Right ventricle myocardium inferior (tissue), 1 donor: ENCODE measurements at regions of chr15 and their contacts with region 1.

Region 1: DNA sequence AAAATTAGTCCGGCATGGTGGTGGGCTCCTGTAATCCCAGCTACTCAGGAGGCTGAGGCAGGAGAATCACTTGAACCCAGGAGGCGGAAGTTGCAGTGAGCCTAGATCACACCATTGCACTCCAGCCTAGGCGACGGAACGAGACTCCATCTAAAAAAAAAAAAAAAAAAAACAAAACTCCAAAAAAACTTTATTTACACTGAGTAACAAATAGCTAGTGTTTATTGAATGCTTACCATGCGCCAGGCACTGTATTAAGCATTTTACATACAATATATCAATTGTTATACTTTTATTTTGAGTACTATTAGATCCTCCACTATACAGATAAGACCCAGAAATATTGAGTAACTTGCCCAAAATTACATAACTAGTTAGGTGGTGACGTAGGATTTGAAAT is 17.4 kb upstream of the ARIH1 start:
- DNase-seq: no peak
- ATAC-seq: no peak

Region 2: DNA sequence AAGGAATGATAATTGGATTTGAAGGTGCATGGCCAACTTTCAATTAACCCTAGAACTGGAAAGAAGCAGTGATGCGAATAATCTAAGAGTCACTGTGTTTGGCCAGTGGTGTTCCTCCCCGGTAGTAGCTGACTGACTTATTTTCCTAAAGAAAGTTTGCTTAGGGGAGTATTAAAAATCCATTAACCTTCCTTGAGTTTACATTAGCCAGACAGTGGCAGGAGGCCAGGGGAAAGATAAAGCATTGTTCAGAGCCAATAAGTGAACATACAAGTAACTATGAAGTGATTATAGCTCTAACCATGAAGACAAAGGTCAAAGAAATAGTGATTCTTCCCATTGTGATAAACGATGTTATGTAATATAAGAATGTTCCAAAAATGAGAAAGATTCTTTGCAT is 67.5 kb before region 1 on chr15:
- intact Hi-C with region 1: loop called (anchors 5 kb)
- DNase-seq: no peak
- ATAC-seq: no peak